Activated CD4-positive, alpha-beta memory T cell treated with anti-CD3 and anti-CD28 coated beads, Interleukin-2, amount 10 ng/mL, durations not matched to agents 7 days and 5 days (primary cell): ENCODE measurements at regions of chr19 and their contacts with region 1.

Region 1: GRCh38 chr19:43784981-43785808 is 4.4 kb upstream of the KCNN4 start:
- DNase-seq: peak; percentile 65
- H3K4me3 Mint-ChIP-seq: peak overlapping the region; percentile 18
- H3K27ac Mint-ChIP-seq: peak overlapping the region; percentile 89
- H3K4me1 Mint-ChIP-seq: peaks cover 46% of the 10 kb centered on the region
- H3K27me3 Mint-ChIP-seq: peaks cover 5% of the 10 kb centered on the region

Region 2: GRCh38 chr19:43639519-43640423 is 145.4 kb before region 1 on chr19 and contains the start of gene CADM4:
- CTCF ChIA-PET with region 1: no interaction called
- POLR2A ChIA-PET with region 1: no interaction called
- DNase-seq: peak; percentile 47
- H3K4me3 Mint-ChIP-seq: peak within 1 kb of the TSS; percentile 68
- H3K27ac Mint-ChIP-seq: no peak within 1 kb of the TSS
- H3K4me1 Mint-ChIP-seq: peaks cover 14% of the 10 kb centered on the region
- H3K27me3 Mint-ChIP-seq: peaks cover 46% of the 10 kb centered on the region
- total RNA-seq, gene CADM4: 0.43 to 0.60 TPM

Region 3: GRCh38 chr19:43754503-43755255 is 30.5 kb before region 1 on chr19 and contains the start of gene SMG9:
- CTCF ChIA-PET with region 1: interaction called, 10 read pairs
- POLR2A ChIA-PET with region 1: interaction called, 149 read pairs
- DNase-seq: peak; percentile 98
- H3K4me3 Mint-ChIP-seq: peak within 1 kb of the TSS; percentile 97
- H3K27ac Mint-ChIP-seq: peak within 1 kb of the TSS; percentile 99
- H3K4me1 Mint-ChIP-seq: peaks cover 67% of the 10 kb centered on the region
- H3K27me3 Mint-ChIP-seq: no peaks in the 10 kb centered on the region
- total RNA-seq, gene SMG9: 58.1 to 64.6 TPM

Region 4: DNA sequence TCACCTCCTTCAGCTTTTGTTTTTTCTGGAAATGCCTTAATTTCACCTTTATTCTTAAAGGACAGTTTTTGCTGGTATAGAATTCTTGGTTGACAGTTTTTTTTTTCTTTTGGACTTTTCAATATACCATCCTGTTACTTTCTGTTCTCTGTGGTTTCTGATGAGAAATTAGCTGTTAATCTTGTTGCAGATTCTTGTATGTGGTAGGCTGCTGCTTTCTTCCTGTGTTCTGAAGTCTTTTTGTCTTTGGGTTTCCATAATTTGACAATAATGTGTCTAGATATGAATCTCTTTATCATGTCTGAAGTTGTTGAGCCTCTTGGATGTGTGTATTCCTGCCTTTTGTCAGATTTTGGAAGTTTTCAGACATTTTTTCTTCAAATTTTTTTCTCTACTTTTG is 53.9 kb after region 1 on chr19:
- CTCF ChIA-PET with region 1: no interaction called
- POLR2A ChIA-PET with region 1: no interaction called
- DNase-seq: no peak
- H3K4me3 Mint-ChIP-seq: no peak overlapping the region
- H3K27ac Mint-ChIP-seq: no peak overlapping the region
- H3K4me1 Mint-ChIP-seq: no peaks in the 10 kb centered on the region
- H3K27me3 Mint-ChIP-seq: no peaks in the 10 kb centered on the region

Region 5: GRCh38 chr19:43901395-43902390 is 116.5 kb after region 1 on chr19:
- CTCF ChIA-PET with region 1: no interaction called
- POLR2A ChIA-PET with region 1: no interaction called
- DNase-seq: peak; percentile 62
- H3K4me3 Mint-ChIP-seq: peak overlapping the region; percentile 77
- H3K27ac Mint-ChIP-seq: no peak overlapping the region
- H3K4me1 Mint-ChIP-seq: peaks cover 15% of the 10 kb centered on the region
- H3K27me3 Mint-ChIP-seq: no peaks in the 10 kb centered on the region